Esophagus muscularis mucosa (tissue), 4 donors: ENCODE measurements at regions of chr1 and their contacts with region 1.

Region 1: GRCh38 chr1:3352299-3352951 is 102.0 kb upstream of the ARHGEF16 start:
- DNase-seq: peak; percentile 95
- H3K4me3 ChIP-seq: peak overlapping the region; percentile 32 to 49 (median 39)
- H3K27ac ChIP-seq: peak overlapping the region; percentile 91 to 98 (median 96)
- H3K4me1 ChIP-seq: peaks cover 47 to 69% (median 57%) of the 10 kb centered on the region in 4 donors
- H3K27me3 ChIP-seq: peaks cover 0 to 34% (median 0%) of the 10 kb centered on the region in 4 donors
- CTCF ChIP-seq: no peak
- EP300 ChIP-seq: peak; percentile 43
- POLR2A ChIP-seq: no peak

Region 2: GRCh38 chr1:3312898-3313575 is 39.4 kb before region 1 on chr1:
- intact Hi-C with region 1: loop called (anchors 2 kb)
- DNase-seq: peak; percentile 98
- H3K4me3 ChIP-seq: peak overlapping the region in 3 of 4 donors; percentile 13 to 41 (median 36)
- H3K27ac ChIP-seq: peak overlapping the region; percentile 94 to 98 (median 96)
- H3K4me1 ChIP-seq: peaks cover 41 to 45% (median 43%) of the 10 kb centered on the region in 4 donors
- H3K27me3 ChIP-seq: peaks cover 0 to 16% (median 0%) of the 10 kb centered on the region in 4 donors
- CTCF ChIP-seq: no peak
- EP300 ChIP-seq: peak; percentile 84
- POLR2A ChIP-seq: no peak

Region 3: GRCh38 chr1:3410142-3410925 is 57.9 kb after region 1 on chr1:
- intact Hi-C with region 1: loop called (anchors 1 kb)
- DNase-seq: no peak
- H3K4me3 ChIP-seq: no peak overlapping the region
- H3K27ac ChIP-seq: no peak overlapping the region
- H3K4me1 ChIP-seq: peaks cover 0 to 9% (median 6%) of the 10 kb centered on the region in 4 donors
- H3K27me3 ChIP-seq: peaks cover 0 to 86% (median 0%) of the 10 kb centered on the region in 4 donors
- CTCF ChIP-seq: peak; percentile 57 to 79 (median 72)
- EP300 ChIP-seq: no peak
- POLR2A ChIP-seq: no peak